CD8-positive, alpha-beta T cell (primary cell): ENCODE measurements at regions of chr7 and their contacts with region 1.

Region 1: DNA sequence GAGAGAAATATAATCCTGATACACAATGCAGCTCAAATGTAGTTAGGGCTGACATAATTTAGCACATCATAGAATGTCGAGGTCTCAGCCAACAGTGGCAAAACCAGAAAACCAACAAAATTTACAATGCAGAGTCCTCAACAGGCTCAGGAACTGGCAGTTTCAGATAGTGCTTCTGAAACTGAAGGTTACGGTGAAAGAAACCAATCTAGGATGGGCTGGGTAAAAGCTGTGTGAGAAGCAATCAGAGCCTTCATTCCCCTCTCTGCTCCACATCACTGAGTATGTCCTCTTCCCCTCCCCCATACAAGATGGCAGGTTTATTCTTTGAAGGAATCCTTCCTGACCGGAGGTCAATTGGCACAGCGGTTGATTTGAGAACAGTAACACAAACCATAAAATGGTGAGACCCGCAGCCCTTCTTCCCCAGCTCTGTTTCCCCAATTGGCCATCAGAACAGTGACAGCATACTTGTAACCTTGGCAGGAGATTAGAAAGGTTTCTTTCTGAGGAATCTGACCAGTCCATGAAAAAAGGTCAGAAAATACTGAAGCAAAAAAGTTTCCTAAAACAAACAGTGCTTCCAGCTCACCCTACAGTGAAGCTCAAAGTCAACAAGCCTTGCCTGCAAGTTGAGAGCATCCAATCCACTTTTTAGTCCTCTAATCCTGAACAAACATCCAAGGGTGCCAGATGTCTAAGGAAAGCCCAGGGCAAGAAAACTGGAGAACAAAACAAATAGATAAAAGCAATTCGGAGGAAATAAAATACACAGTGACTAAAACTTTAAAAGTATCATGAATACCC is 54.0 kb upstream of the IL6 start:
- DNase-seq: no peak
- ATAC-seq: no peak
- H3K4me3 ChIP-seq: no peak overlapping the region
- H3K4me3 Mint-ChIP-seq: no peak overlapping the region
- H3K27ac ChIP-seq: no peak overlapping the region
- H3K27ac Mint-ChIP-seq: no peak overlapping the region
- H3K4me1 ChIP-seq: peaks cover 37% of the 10 kb centered on the region
- H3K4me1 Mint-ChIP-seq: peaks cover 45% of the 10 kb centered on the region
- H3K27me3 ChIP-seq: no peaks in the 10 kb centered on the region
- H3K27me3 Mint-ChIP-seq: no peaks in the 10 kb centered on the region
- CTCF ChIP-seq: no peak

Region 2: DNA sequence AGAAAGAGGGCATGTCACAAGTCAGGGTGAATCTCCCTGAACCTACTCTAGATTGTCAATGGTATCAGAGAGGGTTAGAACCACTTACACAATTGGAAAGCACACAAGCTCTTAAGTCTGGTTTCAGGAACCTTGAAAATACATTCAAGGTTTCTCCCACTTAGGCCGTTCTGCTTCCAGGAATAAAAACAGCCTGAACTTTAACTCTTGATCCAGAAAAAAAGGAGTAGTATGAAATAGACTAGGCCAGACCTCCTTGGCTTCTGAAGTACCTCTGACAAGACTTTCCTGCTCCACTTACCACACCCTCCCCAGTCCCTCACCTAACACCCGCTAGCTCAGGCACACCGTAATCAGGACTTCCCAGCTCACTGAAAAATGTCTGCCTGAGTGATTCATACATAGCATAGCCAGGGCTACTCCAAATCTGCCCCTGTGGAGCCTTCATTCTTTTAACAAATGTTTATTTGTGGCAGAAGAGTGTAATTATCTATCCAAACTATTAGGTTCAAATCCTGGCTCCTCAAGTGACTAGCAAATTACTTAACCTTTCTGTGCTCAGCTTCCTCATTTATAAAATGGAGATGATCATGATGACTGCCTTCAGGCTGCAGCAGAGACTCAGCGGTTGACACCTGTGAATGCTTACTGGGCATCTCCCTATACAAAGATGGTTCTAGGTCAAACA is 23.6 kb after region 1 on chr7:
- CTCF ChIA-PET with region 1: no interaction called
- POLR2A ChIA-PET with region 1: interaction called, 10 read pairs
- intact Hi-C with region 1: no loop called
- DNase-seq: peak in 1 of 9 experiments; percentile 6
- ATAC-seq: no peak
- H3K4me3 ChIP-seq: no peak overlapping the region
- H3K4me3 Mint-ChIP-seq: no peak overlapping the region
- H3K27ac ChIP-seq: no peak overlapping the region
- H3K27ac Mint-ChIP-seq: no peak overlapping the region
- H3K4me1 ChIP-seq: peaks cover 13% of the 10 kb centered on the region
- H3K4me1 Mint-ChIP-seq: peaks cover 22% of the 10 kb centered on the region
- H3K27me3 ChIP-seq: no peaks in the 10 kb centered on the region
- H3K27me3 Mint-ChIP-seq: peaks cover 10% of the 10 kb centered on the region
- CTCF ChIP-seq: no peak

Region 3: GRCh38 chr7:22712999-22713398 is 40.0 kb after region 1 on chr7:
- CTCF ChIA-PET with region 1: no interaction called
- POLR2A ChIA-PET with region 1: no interaction called
- intact Hi-C with region 1: no loop called
- DNase-seq: no peak
- ATAC-seq: no peak
- H3K4me3 ChIP-seq: no peak overlapping the region
- H3K4me3 Mint-ChIP-seq: no peak overlapping the region
- H3K27ac ChIP-seq: no peak overlapping the region
- H3K27ac Mint-ChIP-seq: no peak overlapping the region
- H3K4me1 ChIP-seq: no peaks in the 10 kb centered on the region
- H3K4me1 Mint-ChIP-seq: no peaks in the 10 kb centered on the region
- H3K27me3 ChIP-seq: no peaks in the 10 kb centered on the region
- H3K27me3 Mint-ChIP-seq: peaks cover 5% of the 10 kb centered on the region
- CTCF ChIP-seq: no peak